ENCODE measurements at regions of chr2 and their contacts with region 1.

Region 1: DNA sequence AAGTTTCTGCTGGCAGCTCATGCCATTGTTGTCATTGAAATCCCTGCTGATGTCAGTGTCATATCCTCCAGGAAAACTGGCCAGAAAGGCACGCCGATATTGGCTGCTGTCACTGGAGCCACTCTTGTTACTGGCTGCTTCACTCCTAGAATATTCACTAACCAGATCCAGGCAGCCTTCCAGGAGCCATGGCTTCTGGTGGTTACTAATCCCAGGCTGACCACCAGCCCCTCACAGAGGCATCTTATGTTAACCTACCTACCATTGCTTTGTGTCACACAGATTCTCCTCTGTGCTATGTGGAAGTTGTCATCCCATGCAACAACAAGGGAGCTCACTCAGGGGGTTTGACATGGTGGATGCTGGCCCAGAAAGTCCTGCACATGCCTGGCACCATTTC is 27.0 kb upstream of the MTX2 start:
- DNase-seq: no peak
- H3K4me3 ChIP-seq: no peak overlapping the region
- H3K27ac ChIP-seq: no peak overlapping the region
- H3K4me1 ChIP-seq: no peaks in the 10 kb centered on the region
- H3K27me3 ChIP-seq: no peaks in the 10 kb centered on the region
- CTCF ChIP-seq: no peak
- POLR2A ChIP-seq: no peak

Region 2: DNA sequence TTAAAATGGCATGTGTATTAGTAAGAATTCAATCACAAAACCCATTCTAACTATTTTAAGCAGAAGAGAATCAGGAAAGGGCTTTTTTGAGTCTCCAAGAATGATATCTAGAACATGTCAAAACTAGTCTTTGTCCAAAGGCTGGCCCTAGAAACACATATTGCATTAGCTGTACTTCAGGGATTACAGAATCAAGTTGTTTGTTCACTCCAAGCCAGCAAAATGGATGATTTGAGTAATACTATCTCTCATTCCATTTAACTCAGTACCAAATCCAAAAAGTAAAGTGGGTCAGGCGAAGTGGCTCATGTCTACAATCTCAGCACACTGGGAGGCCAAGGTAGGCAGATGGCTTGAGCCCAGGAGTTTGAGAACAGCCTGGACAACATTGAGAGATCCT is 1115.6 kb before region 1 on chr2:
- intact Hi-C with region 1: no loop called
- DNase-seq: no peak
- H3K4me3 ChIP-seq: no peak overlapping the region
- H3K27ac ChIP-seq: no peak overlapping the region
- H3K4me1 ChIP-seq: no peaks in the 10 kb centered on the region
- H3K27me3 ChIP-seq: no peaks in the 10 kb centered on the region
- CTCF ChIP-seq: no peak
- POLR2A ChIP-seq: no peak

Region 3: DNA sequence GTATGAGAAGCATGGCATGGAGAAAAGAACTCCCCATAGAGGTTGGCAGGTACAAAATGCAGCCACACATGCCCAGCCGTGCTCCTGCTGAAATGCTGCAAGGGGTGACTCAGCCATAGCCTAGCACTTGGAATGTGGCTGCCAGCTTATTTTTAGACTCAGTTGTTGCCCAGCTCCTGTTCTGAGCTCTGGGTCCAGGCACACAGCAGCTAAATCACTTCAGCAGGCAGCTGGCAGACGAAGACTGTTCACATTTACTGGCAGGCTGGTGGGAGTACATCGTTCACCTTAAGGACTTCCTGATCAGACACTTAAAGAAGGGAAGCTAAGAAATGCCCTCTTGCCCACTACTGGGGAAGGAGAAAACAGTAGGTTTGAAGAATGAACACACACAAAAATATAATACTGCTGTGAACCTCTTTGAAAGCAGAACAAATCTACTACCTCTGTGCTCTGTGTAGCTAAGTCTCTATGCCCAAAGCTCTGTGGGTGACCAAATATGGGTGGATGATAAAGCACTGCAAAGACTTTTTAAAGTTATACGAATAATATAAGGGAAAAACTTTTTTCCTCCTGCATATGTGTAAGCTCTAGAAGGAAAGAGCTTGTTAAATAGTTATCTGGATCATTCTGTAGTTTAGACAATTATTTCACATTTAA is 386.4 kb before region 1 on chr2:
- intact Hi-C with region 1: no loop called
- DNase-seq: no peak
- H3K4me3 ChIP-seq: no peak overlapping the region
- H3K27ac ChIP-seq: no peak overlapping the region
- H3K4me1 ChIP-seq: no peaks in the 10 kb centered on the region
- H3K27me3 ChIP-seq: no peaks in the 10 kb centered on the region
- CTCF ChIP-seq: no peak
- POLR2A ChIP-seq: no peak

Region 4: DNA sequence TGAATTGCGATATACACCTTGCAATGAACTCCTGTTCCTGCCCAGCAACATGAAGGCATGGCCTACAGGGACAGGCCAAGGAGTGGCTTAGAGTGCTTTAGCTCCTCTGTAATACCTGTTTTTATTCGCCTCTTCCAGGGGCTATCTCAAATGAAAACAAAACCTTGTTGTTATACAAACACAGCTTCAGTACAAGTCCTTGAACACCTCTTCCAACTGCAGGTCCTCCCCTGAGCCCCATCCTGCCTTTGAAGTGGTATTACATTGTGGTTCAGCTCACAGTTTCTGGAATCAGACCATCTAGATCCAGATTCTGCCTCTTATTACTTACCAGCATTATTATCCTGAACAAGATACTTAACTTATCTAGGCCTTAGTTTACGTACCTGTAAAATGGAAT is 887.3 kb after region 1 on chr2:
- intact Hi-C with region 1: no loop called
- DNase-seq: no peak
- H3K4me3 ChIP-seq: no peak overlapping the region
- H3K27ac ChIP-seq: no peak overlapping the region
- H3K4me1 ChIP-seq: no peaks in the 10 kb centered on the region
- H3K27me3 ChIP-seq: no peaks in the 10 kb centered on the region
- CTCF ChIP-seq: no peak
- POLR2A ChIP-seq: no peak

Region 5: GRCh38 chr2:177429688-177430325 is 1187.5 kb after region 1 on chr2:
- intact Hi-C with region 1: loop called (anchors 5 kb)
- DNase-seq: no peak
- H3K4me3 ChIP-seq: no peak overlapping the region
- H3K27ac ChIP-seq: no peak overlapping the region
- H3K4me1 ChIP-seq: no peaks in the 10 kb centered on the region
- H3K27me3 ChIP-seq: no peaks in the 10 kb centered on the region
- CTCF ChIP-seq: no peak
- POLR2A ChIP-seq: no peak

Region 6: GRCh38 chr2:177460973-177461585 is 1218.8 kb after region 1 on chr2:
- intact Hi-C with region 1: no loop called
- DNase-seq: no peak
- H3K4me3 ChIP-seq: no peak overlapping the region
- H3K27ac ChIP-seq: no peak overlapping the region
- H3K4me1 ChIP-seq: no peaks in the 10 kb centered on the region
- H3K27me3 ChIP-seq: no peaks in the 10 kb centered on the region
- CTCF ChIP-seq: no peak
- POLR2A ChIP-seq: no peak